ENCODE measurements at regions of chr15 and their contacts with region 1.

Region 1: DNA sequence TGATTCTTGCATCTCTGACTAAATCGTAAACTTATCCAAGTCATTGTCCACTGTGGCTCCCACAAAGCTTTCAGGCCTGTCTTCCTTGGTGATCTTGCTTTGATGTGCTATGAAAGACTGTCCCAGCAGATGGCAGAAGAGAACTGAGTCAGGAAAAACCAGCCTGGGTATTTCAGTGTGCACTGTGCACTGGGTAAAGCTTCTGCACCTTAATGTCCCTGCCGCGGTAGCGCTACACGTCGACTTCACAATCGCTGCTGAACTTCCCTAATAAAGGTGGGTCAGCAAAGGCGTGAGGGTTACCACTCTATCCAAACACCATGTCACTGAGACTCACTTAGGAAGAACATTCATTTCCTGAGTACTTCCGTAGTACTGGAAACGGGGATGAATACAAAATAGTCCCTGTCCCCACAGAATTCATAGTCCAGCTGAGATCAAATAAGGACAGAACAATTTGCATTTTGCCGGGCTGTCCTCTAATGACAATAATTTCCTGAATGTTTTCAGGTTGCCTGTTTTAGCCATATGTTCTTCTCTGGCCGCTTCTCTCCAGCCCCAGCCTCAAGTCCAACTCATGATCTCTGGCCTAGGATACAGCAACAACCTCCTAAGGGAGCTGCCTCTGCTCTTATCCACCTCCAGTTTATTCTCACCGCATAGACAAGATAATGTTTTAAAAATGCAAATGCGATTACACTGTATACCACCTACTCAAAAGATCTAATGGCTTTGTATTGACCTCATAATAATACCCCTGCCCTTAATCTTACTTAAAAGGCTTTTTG is 83.6 kb upstream of the AKAP13 start:
- DNase-seq: peak; percentile 81
- ATAC-seq: peak; percentile 100
- H3K4me3 ChIP-seq: peak overlapping the region; percentile 15; the same call in 1 of the 2 replicates
- H3K27ac ChIP-seq: no peak overlapping the region
- H3K4me1 ChIP-seq: no peaks in the 10 kb centered on the region
- H3K27me3 ChIP-seq: no peaks in the 10 kb centered on the region
- CTCF ChIP-seq: peak; percentile 82
- POLR2A ChIP-seq: no peak
- RAD21 ChIP-seq: peak; percentile 93

Region 2: DNA sequence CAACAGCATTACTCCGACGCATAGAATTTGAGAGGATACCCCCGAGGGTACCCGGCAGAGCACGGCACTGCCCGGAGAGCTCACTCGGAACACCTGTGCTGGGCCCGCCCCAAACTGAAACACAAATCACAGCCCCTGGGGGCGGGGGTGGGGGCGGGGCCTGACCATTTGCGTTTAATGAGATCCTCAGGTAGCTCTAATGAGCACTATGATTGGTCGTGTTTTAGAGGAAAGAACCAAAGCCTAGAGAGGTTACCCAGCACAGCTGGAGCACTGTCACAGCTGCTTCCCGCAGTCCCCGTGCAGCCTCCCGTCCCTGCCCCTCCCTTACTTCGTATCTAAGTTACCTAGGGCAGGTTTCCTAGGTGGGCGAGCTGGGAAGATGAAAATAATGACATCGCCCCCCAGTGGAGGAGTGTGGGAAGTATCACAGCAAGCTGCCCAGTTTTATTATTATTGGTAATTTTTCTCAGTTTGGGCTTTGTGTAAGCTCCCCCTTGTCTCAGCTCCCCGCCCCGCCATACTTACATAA is 128.1 kb before region 1 on chr15:
- CTCF ChIA-PET with region 1: no interaction called
- POLR2A ChIA-PET with region 1: no interaction called
- dilution Hi-C with region 1: no loop called
- in situ Hi-C with region 1: loop called (anchors 25 kb)
- intact Hi-C with region 1: no loop called
- DNase-seq: peak; percentile 8
- ATAC-seq: peak; percentile 61
- H3K4me3 ChIP-seq: peak overlapping the region; percentile 14; the same call in 1 of the 2 replicates
- H3K27ac ChIP-seq: no peak overlapping the region
- H3K4me1 ChIP-seq: no peaks in the 10 kb centered on the region
- H3K27me3 ChIP-seq: no peaks in the 10 kb centered on the region; the same call in 1 of the 2 replicates
- CTCF ChIP-seq: peak; percentile 47
- POLR2A ChIP-seq: no peak
- RAD21 ChIP-seq: peak; percentile 38; the same call in 1 of the 2 replicates

Region 3: DNA sequence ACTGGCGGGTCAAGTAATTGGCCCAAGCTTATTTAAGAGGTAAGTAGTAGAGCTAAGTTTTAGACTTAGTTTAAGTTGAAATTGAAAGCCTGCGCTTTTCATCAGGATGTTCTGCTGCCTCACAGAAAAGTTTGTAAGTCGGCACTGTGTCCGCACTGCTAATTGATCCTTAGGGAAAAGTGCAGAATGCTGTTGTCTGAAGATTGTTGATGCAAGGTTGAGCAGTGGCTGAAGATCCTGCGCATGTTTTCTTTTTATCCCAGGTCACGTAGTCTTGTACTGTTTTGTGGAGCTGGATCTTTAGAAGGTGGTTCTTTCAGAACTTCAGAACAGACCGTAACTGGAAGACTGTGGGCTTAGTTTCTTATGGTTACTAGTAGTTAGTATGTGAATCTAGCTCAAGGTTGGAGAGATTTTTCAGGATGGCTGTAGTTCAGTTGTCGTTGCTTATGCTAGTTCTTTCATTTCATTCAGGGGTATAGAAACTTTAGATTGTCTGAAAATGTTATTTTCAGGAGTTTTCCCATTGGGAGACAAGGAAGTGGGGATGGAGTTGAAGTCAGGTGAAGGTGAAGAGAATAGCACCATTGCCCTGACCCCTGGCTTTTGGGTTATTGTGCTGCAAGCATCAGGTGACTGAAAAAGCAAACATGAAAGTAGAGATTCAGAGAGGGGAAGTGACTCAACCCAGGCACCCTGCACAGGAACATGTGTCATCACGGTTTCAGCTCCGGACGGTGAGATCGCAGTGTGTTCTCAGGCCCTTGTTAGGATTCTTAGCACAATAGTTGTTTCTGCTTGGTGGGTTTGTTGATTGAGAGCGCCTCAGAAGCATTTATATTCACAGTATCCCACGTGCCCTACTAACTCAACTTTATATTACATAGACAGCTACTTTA is 116.4 kb after region 1 on chr15:
- CTCF ChIA-PET with region 1: interaction called, 9 read pairs
- POLR2A ChIA-PET with region 1: no interaction called
- dilution Hi-C with region 1: no loop called
- in situ Hi-C with region 1: no loop called
- intact Hi-C with region 1: loop called (anchors 1 kb)
- DNase-seq: peak; percentile 95
- ATAC-seq: peak; percentile 88
- H3K4me3 ChIP-seq: no peak overlapping the region
- H3K27ac ChIP-seq: no peak overlapping the region
- H3K4me1 ChIP-seq: peaks cover 6% of the 10 kb centered on the region
- H3K27me3 ChIP-seq: no peaks in the 10 kb centered on the region
- CTCF ChIP-seq: no peak
- POLR2A ChIP-seq: no peak
- RAD21 ChIP-seq: peak; percentile 35

Region 4: DNA sequence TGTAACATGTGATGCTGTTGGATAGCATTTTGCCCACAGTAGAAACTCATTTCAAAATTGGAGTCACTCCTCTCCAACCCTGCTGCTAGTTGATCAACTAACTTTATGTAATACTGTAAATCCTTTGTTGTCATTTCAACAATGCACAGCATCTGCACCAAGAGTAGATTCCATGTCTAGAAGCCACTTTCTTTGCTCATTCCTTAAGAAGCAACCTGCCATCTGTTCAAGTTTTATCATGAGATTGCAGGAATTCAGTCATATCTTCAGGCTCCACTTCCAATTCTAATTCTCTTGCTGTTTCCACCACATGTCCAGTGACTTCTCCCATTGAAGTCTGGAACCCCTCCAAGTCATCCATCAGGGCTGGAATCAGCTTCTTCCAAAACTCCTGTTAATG is 126.4 kb after region 1 on chr15:
- CTCF ChIA-PET with region 1: no interaction called
- POLR2A ChIA-PET with region 1: no interaction called
- dilution Hi-C with region 1: no loop called
- in situ Hi-C with region 1: no loop called
- intact Hi-C with region 1: no loop called
- DNase-seq: no peak
- ATAC-seq: no peak
- H3K4me3 ChIP-seq: no peak overlapping the region
- H3K27ac ChIP-seq: no peak overlapping the region
- H3K4me1 ChIP-seq: peaks cover 9% of the 10 kb centered on the region; the same call in 1 of the 2 replicates
- H3K27me3 ChIP-seq: no peaks in the 10 kb centered on the region
- CTCF ChIP-seq: no peak
- POLR2A ChIP-seq: no peak
- RAD21 ChIP-seq: no peak

Region 5: DNA sequence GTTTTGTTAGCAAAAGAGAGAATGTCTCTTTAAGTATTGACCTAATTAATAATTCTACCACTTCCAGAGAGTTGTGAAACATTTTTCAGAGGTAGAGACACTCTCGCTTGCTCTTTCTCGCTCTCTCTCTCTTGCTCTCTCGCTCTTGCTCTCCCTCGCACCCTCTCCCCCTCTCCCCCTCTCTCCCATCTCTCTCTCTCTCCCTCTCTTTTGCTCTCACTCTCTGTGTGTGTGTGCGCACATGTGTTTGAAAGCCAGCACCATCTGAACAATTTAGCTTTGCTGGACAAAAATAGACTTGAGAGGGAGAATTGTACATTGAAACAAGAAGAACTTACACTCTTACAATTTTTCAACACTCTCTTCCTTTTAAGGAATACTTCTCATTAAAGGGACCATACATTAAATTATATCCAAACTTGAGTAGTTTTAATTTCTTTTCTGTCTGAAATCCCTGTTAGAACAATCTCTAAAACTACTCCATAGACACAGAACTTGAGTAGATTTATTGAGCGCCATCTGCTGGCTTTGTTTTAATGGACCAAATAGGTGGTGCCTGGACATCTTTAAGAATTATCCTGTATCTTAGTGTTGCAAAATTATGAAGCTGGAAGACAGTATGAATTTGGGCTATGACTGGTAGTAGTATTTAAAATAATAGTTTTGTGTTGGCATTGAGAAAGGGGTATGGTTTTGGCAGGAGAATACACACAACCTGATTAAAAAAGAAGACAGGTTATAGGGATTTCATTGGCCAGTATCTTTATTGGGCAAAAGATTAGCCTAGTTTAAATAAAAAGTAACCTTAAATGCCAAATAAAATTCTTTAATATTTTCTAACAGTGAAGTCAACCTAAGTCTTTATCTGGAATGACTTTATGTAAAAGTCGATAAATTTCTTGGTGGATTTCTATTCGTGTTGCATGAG is 208.2 kb after region 1 on chr15:
- CTCF ChIA-PET with region 1: interaction called, 4 read pairs
- POLR2A ChIA-PET with region 1: no interaction called
- dilution Hi-C with region 1: no loop called
- in situ Hi-C with region 1: no loop called
- intact Hi-C with region 1: loop called (anchors 1 kb)
- DNase-seq: peak; percentile 74
- ATAC-seq: peak; percentile 89
- H3K4me3 ChIP-seq: no peak overlapping the region
- H3K27ac ChIP-seq: no peak overlapping the region
- H3K4me1 ChIP-seq: peaks cover 5% of the 10 kb centered on the region
- H3K27me3 ChIP-seq: no peaks in the 10 kb centered on the region
- CTCF ChIP-seq: peak; percentile 65
- POLR2A ChIP-seq: no peak
- RAD21 ChIP-seq: peak; percentile 59

Region 6: GRCh38 chr15:85689729-85690128 is 392.9 kb after region 1 on chr15:
- CTCF ChIA-PET with region 1: interaction called, 3 read pairs
- POLR2A ChIA-PET with region 1: no interaction called
- dilution Hi-C with region 1: no loop called
- in situ Hi-C with region 1: no loop called
- intact Hi-C with region 1: loop called (anchors 1 kb)
- DNase-seq: peak; percentile 72
- ATAC-seq: peak; percentile 94
- H3K4me3 ChIP-seq: peak overlapping the region; percentile 33
- H3K27ac ChIP-seq: peak overlapping the region; percentile 79
- H3K4me1 ChIP-seq: peaks cover 2% of the 10 kb centered on the region; the same call in 1 of the 2 replicates
- H3K27me3 ChIP-seq: no peaks in the 10 kb centered on the region
- CTCF ChIP-seq: no peak
- POLR2A ChIP-seq: no peak
- RAD21 ChIP-seq: no peak

Region 7: GRCh38 chr15:85730001-85730820 is 433.4 kb after region 1 on chr15:
- CTCF ChIA-PET with region 1: no interaction called
- POLR2A ChIA-PET with region 1: no interaction called
- dilution Hi-C with region 1: no loop called
- in situ Hi-C with region 1: no loop called
- intact Hi-C with region 1: loop called (anchors 2 kb)
- DNase-seq: peak; percentile 71
- ATAC-seq: peak; percentile 73
- H3K4me3 ChIP-seq: no peak overlapping the region
- H3K27ac ChIP-seq: no peak overlapping the region
- H3K4me1 ChIP-seq: peaks cover 4% of the 10 kb centered on the region
- H3K27me3 ChIP-seq: no peaks in the 10 kb centered on the region
- CTCF ChIP-seq: peak; percentile 80
- POLR2A ChIP-seq: no peak
- RAD21 ChIP-seq: peak; percentile 80

Measured in IMR-90 (cell line).